Motor neuron (in vitro differentiated cells): ENCODE measurements at regions of chr2 and their contacts with region 1.

Region 1: DNA sequence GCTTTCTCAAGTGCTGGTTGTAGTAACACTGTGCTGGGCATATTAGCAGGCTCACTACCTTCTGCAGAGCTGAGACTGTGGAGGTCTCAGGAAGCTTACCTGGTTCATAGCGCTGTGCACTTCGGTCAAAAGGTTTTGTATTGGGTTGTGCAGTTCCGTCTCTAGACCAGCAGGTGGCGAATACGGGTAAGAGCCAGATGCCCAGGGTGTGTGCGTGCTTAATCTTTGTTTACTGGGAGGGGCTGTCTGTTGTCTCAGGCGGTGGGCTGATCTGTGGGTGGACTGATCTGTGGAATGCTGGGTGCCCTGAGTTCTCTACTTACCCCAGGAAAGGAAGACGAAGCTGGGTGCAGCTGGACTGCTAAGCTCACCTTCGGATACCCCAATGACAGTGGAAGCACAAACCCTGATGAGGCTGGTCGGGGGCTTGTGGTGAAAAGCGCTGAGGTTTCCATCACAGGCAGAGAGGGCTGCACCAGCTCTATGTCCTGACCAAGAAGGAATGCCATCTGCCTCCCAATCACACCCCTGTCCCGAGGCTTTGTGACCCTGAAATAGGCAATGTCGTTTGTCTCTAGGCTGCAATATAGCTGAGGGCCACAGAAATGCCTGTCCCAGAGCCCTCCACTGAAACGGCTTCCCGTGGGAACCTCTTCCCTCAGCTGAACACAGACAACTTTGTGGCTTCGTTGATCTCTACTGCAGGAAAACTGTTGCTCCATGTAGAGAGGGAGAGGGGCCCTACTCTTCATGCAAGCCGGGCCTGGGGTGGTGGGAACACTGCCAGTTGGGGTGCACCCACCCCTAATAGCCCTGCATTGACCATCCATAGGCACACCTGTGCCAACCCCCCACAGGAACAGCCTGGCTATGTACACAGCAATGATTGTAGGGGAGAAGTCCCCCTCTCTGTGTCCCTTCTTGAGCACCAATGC is 45.9 kb upstream of the FAM117B start:
- ATAC-seq: peak; percentile 89 to 99 (median 97)
- H3K4me3 ChIP-seq: no peak overlapping the region
- H3K27ac ChIP-seq: no peak overlapping the region
- H3K4me1 ChIP-seq: peaks cover 3 to 6% of the 10 kb centered on the region in 2 donors

Region 2: GRCh38 chr2:202317080-202317857 is 271.6 kb before region 1 on chr2:
- in situ Hi-C with region 1: no loop called
- ATAC-seq: peak in 4 of 8 experiments; percentile 50 to 89 (median 82)
- H3K4me3 ChIP-seq: no peak overlapping the region
- H3K27ac ChIP-seq: no peak overlapping the region
- H3K4me1 ChIP-seq: no peaks in the 10 kb centered on the region

Region 3: DNA sequence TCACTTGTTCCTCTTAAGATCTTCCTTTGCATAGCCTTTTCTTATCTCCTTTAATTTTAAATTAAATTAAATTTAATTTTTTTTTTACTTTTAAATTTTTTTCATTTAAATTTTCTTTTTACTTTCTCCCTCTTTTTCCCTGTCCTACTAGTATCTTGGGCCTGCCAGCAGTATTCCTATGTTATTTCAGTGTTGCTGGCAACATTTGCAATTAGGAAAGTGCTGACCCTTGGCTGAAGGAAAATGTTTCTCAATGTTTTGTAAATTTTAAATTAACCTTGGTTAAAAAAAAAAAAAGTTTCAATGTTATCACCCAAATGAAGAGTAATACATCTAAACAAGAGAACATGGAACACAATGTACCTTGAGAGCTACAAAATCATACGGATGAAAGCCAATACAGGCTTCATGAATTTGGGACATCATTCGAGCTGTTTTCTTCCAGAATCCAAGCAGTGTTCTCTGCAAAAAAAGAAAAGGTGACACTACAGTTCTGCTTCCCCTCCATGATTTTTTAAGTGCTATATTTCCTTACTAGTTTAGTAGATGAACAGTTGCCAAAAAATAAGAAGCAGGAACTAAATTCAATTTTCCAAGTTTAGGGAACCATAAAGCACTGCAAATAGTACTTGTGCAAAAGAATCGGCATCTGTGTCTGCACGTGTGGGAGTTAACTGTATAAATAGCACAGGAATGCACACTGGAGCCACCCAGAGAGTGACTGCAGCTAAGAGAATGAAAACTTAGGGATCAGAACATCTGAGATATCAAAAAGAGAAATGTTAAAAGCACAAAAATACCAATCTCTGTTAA is 226.8 kb after region 1 on chr2:
- in situ Hi-C with region 1: loop called in 1 of 9 experiments (anchors 25 kb)
- ATAC-seq: peak in 3 of 8 experiments; percentile 29 to 63 (median 45)
- H3K4me3 ChIP-seq: no peak overlapping the region
- H3K27ac ChIP-seq: no peak overlapping the region
- H3K4me1 ChIP-seq: no peaks in the 10 kb centered on the region

Region 4: GRCh38 chr2:202870431-202871299 is 281.8 kb after region 1 on chr2:
- in situ Hi-C with region 1: loop called in 1 of 9 experiments (anchors 25 kb)
- ATAC-seq: peak; percentile 80 to 88 (median 82)
- H3K4me3 ChIP-seq: peak overlapping the region; percentile 61 to 89 (median 71)
- H3K27ac ChIP-seq: peak overlapping the region; percentile 83 to 90
- H3K4me1 ChIP-seq: peaks cover 0 to 7% of the 10 kb centered on the region in 2 donors